Panc1 (cell line): ENCODE measurements at regions of chr1 and their contacts with region 1.

Region 1: GRCh38 chr1:3624200-3625136 is at the start of gene TPRG1L:
- DNase-seq: peak; percentile 57
- ATAC-seq: peak; percentile 96
- H3K4me3 ChIP-seq: peak within 1 kb of the TSS; percentile 85 to 97
- H3K27ac ChIP-seq: peak within 1 kb of the TSS; percentile 73
- H3K4me1 ChIP-seq: peaks cover 11% of the 10 kb centered on the region
- H3K27me3 ChIP-seq: no peaks in the 10 kb centered on the region
- CTCF ChIP-seq: no peak
- total RNA-seq, gene TPRG1L: 57.5 TPM

Region 2: GRCh38 chr1:2443277-2444137 is 1181.0 kb before region 1 on chr1:
- CTCF ChIA-PET with region 1: no interaction called
- POLR2A ChIA-PET with region 1: no interaction called
- in situ Hi-C with region 1: no loop called
- intact Hi-C with region 1: no loop called
- DNase-seq: no peak
- ATAC-seq: peak; percentile 17
- H3K4me3 ChIP-seq: peak overlapping the region; percentile 46 to 73
- H3K27ac ChIP-seq: peak overlapping the region; percentile 96
- H3K4me1 ChIP-seq: peaks cover 59% of the 10 kb centered on the region
- H3K27me3 ChIP-seq: no peaks in the 10 kb centered on the region
- CTCF ChIP-seq: peak; percentile 88; the same call in 1 of the 2 replicates

Region 3: DNA sequence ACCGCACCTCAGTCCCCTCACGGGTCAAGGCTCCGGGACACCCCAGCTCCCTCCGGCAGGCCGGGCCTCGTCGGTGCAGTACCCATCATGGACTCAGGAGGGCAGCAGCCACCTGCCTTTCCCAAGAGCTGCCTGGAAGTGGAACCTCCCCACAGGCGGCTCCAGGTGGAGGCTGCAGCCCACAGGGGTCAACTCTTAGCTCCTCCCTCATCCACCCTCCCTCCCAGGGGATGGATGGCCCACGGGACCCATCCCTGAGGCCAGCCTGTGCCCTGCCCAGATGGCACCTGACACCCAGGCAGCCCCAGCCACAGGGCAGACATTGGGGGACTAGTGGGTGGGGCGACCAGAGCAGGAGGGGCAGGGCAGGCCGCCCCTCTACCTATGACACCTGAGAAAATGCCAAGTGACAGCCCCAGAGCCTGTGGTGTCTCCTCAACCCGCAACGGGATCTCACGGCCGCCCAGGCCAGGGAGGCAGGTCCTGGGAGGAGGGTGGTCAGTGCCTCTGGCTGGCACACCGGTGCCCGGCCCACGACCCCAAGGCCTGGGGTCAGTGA is 171.2 kb before region 1 on chr1:
- CTCF ChIA-PET with region 1: interaction called, 24 read pairs
- POLR2A ChIA-PET with region 1: no interaction called
- in situ Hi-C with region 1: no loop called
- intact Hi-C with region 1: loop called (anchors 2 kb)
- DNase-seq: peak; percentile 32
- ATAC-seq: peak; percentile 79
- H3K4me3 ChIP-seq: no peak overlapping the region
- H3K27ac ChIP-seq: no peak overlapping the region
- H3K4me1 ChIP-seq: peaks cover 9% of the 10 kb centered on the region
- H3K27me3 ChIP-seq: no peaks in the 10 kb centered on the region
- CTCF ChIP-seq: peak; percentile 96

Region 4: DNA sequence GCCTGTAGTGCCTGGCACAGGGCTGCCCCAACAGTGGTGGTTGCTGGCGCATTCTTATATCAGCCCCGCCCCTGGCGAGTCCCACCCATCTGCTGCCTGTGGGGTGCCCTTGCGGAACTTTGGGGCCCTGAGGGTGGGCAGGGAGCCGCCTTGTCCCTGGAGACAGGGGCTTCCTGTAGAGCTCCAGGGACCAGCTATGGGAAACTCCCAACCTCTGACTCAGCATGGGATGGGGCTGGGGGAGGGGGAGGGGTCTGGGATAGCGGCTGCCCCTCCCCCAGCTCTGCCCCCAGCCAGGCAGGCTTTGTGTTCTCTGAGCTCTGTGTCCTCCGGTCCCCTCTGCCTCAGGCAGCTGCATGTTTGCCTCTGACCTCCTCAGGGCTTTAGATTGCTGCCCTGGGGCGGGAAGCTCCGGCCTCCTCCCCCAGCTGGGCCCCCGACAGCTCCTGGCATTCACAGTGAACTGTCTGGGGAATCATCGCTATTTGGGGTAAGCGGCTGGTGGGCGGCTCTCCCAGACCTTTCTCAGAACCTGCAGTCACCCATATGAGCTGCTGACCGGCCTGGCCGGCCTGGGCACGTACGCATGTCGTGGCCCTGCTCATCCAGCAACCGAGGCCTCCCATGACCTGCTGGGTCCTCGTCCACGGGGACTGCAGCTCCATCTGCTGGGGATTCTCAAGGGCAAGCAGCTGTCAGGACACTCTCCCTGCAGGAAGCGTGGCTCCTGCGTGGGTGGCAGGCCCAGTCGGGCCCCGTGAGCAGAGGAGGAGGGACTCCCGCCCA is 153.0 kb before region 1 on chr1:
- CTCF ChIA-PET with region 1: interaction called, 10 read pairs
- POLR2A ChIA-PET with region 1: no interaction called
- in situ Hi-C with region 1: no loop called
- intact Hi-C with region 1: no loop called
- DNase-seq: no peak
- ATAC-seq: peak; percentile 62
- H3K4me3 ChIP-seq: no peak overlapping the region
- H3K27ac ChIP-seq: no peak overlapping the region
- H3K4me1 ChIP-seq: peaks cover 22% of the 10 kb centered on the region
- H3K27me3 ChIP-seq: no peaks in the 10 kb centered on the region
- CTCF ChIP-seq: no peak; the same call in 1 of the 2 replicates

Region 5: GRCh38 chr1:3727042-3727824 is 102.8 kb after region 1 on chr1:
- CTCF ChIA-PET with region 1: interaction called, 7 read pairs
- POLR2A ChIA-PET with region 1: no interaction called
- in situ Hi-C with region 1: no loop called
- intact Hi-C with region 1: loop called (anchors 10 kb)
- DNase-seq: no peak
- ATAC-seq: peak; percentile 85
- H3K4me3 ChIP-seq: no peak overlapping the region
- H3K27ac ChIP-seq: no peak overlapping the region
- H3K4me1 ChIP-seq: no peaks in the 10 kb centered on the region; the same call in 1 of the 2 replicates
- H3K27me3 ChIP-seq: no peaks in the 10 kb centered on the region
- CTCF ChIP-seq: peak; percentile 89